ENCODE measurements at regions of chr16 and their contacts with region 1.

Region 1: DNA sequence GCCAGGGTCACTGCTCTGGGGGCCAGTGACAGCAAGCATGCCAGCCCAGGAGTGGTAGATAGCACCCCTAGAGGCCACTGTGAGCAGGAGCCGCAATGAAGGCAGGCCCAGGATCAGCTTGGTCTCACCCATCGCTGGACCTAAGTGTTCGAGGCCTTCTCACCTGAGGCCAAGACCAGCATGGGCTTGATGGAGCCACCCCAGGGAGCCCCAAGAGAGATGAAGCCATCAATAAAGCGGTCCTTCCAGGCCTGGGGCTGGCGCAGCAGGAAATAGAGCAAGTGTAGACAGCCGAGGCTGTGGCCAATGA is 1.8 kb downstream of the LCAT start:
- DNase-seq: peak; percentile 61
- ATAC-seq: peak; percentile 44
- H3K4me3 ChIP-seq: no peak overlapping the region
- H3K27ac ChIP-seq: peak overlapping the region; percentile 85
- H3K4me1 ChIP-seq: peaks cover 59% of the 10 kb centered on the region
- H3K27me3 ChIP-seq: no peaks in the 10 kb centered on the region
- CTCF ChIP-seq: peak; percentile 91
- EP300 ChIP-seq: no peak
- POLR2A ChIP-seq: no peak
- RAD21 ChIP-seq: peak; percentile 53; the same call in 1 of the 2 replicates

Region 2: DNA sequence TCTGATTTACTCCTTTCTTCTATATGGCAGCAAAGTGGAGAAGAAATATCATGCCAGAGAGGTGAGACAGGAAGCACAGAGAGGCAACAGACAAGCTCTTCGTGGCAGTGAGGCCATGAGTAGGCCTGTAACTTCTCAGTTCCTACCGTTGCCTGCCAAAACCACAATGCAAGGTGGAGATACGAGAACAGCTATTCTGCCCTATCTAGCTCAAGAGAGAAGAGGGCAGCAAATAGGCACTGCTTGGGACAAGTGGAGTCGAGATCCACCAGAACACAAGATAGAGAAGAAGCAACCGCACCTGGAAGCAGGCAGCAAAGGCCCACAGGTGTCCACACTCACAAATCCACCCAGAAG is 160.6 kb before region 1 on chr16:
- CTCF ChIA-PET with region 1: no interaction called
- POLR2A ChIA-PET with region 1: no interaction called
- in situ Hi-C with region 1: no loop called
- intact Hi-C with region 1: no loop called
- DNase-seq: no peak
- ATAC-seq: no peak
- H3K4me3 ChIP-seq: no peak overlapping the region
- H3K27ac ChIP-seq: no peak overlapping the region
- H3K4me1 ChIP-seq: peaks cover 21% of the 10 kb centered on the region
- H3K27me3 ChIP-seq: no peaks in the 10 kb centered on the region
- CTCF ChIP-seq: no peak
- EP300 ChIP-seq: no peak
- POLR2A ChIP-seq: no peak
- RAD21 ChIP-seq: no peak

Region 3: DNA sequence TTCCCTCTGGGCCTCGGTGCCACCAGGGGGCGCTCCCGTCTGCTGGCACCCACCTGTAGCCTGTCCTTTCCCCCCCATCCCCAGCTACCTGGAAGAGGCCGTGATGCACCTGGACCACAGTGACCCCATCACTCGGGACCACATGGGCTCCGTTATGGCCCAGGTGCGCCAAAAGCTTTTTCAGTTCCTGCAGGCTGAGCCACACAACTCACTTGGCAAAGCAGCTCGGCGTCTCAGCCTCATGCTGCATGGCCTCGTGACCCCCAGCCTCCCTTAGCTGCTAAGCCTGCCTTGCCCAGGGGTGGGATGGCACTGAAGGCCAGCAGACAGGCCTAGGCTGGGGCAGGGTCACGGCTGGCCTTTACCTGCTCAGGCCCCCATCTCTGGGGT is 58.3 kb before region 1 on chr16:
- CTCF ChIA-PET with region 1: interaction called, 8 read pairs
- POLR2A ChIA-PET with region 1: interaction called, 12 read pairs
- in situ Hi-C with region 1: no loop called
- intact Hi-C with region 1: no loop called
- DNase-seq: peak; percentile 51
- ATAC-seq: peak; percentile 79
- H3K4me3 ChIP-seq: no peak overlapping the region
- H3K27ac ChIP-seq: peak overlapping the region; percentile 36
- H3K4me1 ChIP-seq: peaks cover 31% of the 10 kb centered on the region
- H3K27me3 ChIP-seq: no peaks in the 10 kb centered on the region
- CTCF ChIP-seq: peak; percentile 96
- EP300 ChIP-seq: no peak
- POLR2A ChIP-seq: no peak
- RAD21 ChIP-seq: peak; percentile 96

Region 4: DNA sequence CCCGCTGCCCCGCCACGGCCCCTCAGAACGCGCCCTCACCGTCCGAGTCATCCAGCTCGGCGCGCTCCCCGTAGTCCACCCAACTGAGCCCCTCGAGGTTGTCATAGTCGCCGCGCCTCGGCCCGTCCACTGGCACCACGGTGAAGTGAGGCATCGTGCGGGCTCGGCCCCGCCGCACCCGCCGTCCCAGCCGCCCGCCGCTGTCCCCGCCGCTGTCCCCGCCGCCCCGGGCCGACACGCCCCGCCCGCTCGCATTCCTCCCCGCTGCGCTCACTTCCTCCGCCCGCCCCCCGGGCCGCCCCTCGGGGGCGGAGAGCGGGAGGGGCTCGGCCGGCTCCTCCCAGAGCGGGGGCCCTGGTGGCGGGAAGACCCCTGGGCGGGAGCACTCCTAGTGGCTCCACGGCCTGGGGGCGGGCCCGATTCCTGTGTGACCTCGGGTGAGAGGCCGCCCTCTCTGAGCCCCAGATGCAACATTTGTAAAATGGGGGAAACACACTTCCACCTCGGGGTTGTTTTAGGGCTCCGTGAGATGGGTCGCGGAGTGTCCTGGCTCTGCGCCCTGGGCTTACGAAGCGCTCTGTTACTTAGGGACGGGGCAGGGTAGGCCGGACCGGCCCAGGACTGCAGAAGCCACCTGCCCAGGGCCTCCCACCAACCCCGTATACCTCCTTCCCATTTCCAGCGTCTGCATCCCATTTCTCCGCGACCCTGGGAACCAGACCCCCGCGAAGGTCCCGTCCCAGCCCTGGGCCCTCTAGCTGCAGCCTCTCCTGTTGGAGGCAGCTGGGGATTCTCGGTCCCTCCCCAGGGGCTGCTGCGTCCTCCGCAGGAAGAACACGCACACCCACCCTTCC is 26.5 kb after region 1 on chr16 and contains the start of gene SLC12A4:
- CTCF ChIA-PET with region 1: no interaction called
- POLR2A ChIA-PET with region 1: interaction called, 226 read pairs
- in situ Hi-C with region 1: no loop called
- intact Hi-C with region 1: loop called (anchors 2 kb)
- DNase-seq: peak; percentile 86
- ATAC-seq: peak; percentile 73
- H3K4me3 ChIP-seq: peak within 1 kb of the TSS; percentile 89 to 91 (median 90)
- H3K27ac ChIP-seq: peak within 1 kb of the TSS; percentile 92
- H3K4me1 ChIP-seq: peaks cover 57% of the 10 kb centered on the region
- H3K27me3 ChIP-seq: no peaks in the 10 kb centered on the region; a peak in 1 of 5 replicates
- CTCF ChIP-seq: peak; percentile 13; the same call in 1 of the 2 replicates
- EP300 ChIP-seq: peak in 1 of 2 experiments; percentile 73; a peak in 1 of 4 replicates
- POLR2A ChIP-seq: peak; percentile 66 to 81
- RAD21 ChIP-seq: peak; percentile 5; the same call in 1 of the 2 replicates
- total RNA-seq, gene SLC12A4: 23.1 and 65.1 TPM in 2 replicates

Region 5: GRCh38 chr16:67987460-67988160 is 45.5 kb after region 1 on chr16:
- CTCF ChIA-PET with region 1: no interaction called
- POLR2A ChIA-PET with region 1: interaction called, 29 read pairs
- in situ Hi-C with region 1: no loop called
- intact Hi-C with region 1: no loop called
- DNase-seq: peak; percentile 57
- ATAC-seq: peak; percentile 66
- H3K4me3 ChIP-seq: peak overlapping the region; percentile 24 to 61 (median 30)
- H3K27ac ChIP-seq: no peak overlapping the region
- H3K4me1 ChIP-seq: peaks cover 60% of the 10 kb centered on the region
- H3K27me3 ChIP-seq: peaks cover 2 to 18% of the 10 kb centered on the region in 2 experiments
- CTCF ChIP-seq: peak; percentile 41
- EP300 ChIP-seq: no peak
- POLR2A ChIP-seq: peak; percentile 40 to 48; a peak in 2 of 4 replicates
- RAD21 ChIP-seq: no peak

Region 6: DNA sequence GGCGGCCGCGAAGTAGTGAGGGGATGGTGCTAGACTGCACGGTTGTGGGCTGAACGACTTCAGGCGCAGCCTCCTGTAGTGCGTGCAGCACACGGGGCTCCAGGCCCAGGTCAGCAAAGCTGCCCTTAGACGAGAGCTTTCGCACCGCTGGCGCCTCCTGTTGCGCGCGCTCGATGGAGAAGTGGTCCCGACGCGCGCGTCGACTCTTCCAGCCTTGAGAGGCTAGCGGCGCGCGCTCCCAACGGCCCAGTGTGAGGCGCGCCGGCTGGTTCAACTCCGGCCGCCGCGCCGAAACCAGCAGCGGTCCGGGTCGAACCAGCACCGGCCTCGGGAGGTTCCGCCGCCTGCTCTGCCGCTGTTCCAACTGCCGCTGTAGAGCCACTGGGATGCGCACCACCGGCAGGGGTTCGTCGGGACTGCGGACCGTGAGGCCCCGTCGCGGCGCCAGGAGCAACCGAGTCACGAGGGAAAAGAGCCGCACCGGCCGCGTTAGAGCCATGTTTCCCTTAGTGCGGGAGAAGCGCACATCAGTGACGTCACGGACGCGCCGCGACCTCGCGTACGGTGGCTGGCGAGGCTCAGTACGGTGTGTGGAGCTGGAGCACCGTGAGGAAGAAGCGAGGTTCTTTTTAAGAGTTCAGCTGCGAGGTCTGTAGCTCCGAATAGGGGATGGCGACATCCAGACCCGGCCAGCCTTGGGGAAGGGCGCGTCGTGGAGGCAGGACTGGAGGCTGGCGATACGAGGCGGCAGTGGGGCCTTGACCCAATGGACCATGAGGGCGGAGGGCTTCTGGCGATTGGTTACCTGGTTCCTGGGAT is 80.8 kb after region 1 on chr16 and contains the starts of genes DDX28 and DUS2:
- CTCF ChIA-PET with region 1: no interaction called
- POLR2A ChIA-PET with region 1: interaction called, 26 read pairs
- in situ Hi-C with region 1: no loop called
- intact Hi-C with region 1: no loop called
- DNase-seq: peak; percentile 88
- ATAC-seq: peak; percentile 88
- H3K4me3 ChIP-seq: peak within 1 kb of the TSS; percentile 92 to 99 (median 92)
- H3K27ac ChIP-seq: peak within 1 kb of the TSS; percentile 83
- H3K4me1 ChIP-seq: peaks cover 24% of the 10 kb centered on the region
- H3K27me3 ChIP-seq: no peaks in the 10 kb centered on the region; a peak in 1 of 5 replicates
- CTCF ChIP-seq: peak; percentile 34; the same call in 1 of the 2 replicates
- EP300 ChIP-seq: peak; percentile 37 to 77; a peak in 2 of 4 replicates
- POLR2A ChIP-seq: peak; percentile 88 to 92
- RAD21 ChIP-seq: peak; percentile 38; the same call in 1 of the 2 replicates
- total RNA-seq, gene DDX28: 16.4 and 18.4 TPM in 2 replicates
- total RNA-seq, gene DUS2: 25.1 and 25.9 TPM in 2 replicates

Region 7: GRCh38 chr16:68040507-68041288 is 98.5 kb after region 1 on chr16:
- CTCF ChIA-PET with region 1: interaction called, 5 read pairs
- POLR2A ChIA-PET with region 1: no interaction called
- in situ Hi-C with region 1: loop called (anchors 5 kb)
- intact Hi-C with region 1: loop called (anchors 2 kb)
- DNase-seq: peak; percentile 82
- ATAC-seq: peak; percentile 99
- H3K4me3 ChIP-seq: no peak overlapping the region
- H3K27ac ChIP-seq: no peak overlapping the region
- H3K4me1 ChIP-seq: peaks cover 5% of the 10 kb centered on the region; the same call in 1 of the 2 replicates
- H3K27me3 ChIP-seq: no peaks in the 10 kb centered on the region
- CTCF ChIP-seq: peak; percentile 95
- EP300 ChIP-seq: no peak
- POLR2A ChIP-seq: no peak
- RAD21 ChIP-seq: peak; percentile 97

Measured in HepG2 (cell line).